PC-9 (cell line): ENCODE measurements at regions of chr17 and their contacts with region 1.

Region 1: DNA sequence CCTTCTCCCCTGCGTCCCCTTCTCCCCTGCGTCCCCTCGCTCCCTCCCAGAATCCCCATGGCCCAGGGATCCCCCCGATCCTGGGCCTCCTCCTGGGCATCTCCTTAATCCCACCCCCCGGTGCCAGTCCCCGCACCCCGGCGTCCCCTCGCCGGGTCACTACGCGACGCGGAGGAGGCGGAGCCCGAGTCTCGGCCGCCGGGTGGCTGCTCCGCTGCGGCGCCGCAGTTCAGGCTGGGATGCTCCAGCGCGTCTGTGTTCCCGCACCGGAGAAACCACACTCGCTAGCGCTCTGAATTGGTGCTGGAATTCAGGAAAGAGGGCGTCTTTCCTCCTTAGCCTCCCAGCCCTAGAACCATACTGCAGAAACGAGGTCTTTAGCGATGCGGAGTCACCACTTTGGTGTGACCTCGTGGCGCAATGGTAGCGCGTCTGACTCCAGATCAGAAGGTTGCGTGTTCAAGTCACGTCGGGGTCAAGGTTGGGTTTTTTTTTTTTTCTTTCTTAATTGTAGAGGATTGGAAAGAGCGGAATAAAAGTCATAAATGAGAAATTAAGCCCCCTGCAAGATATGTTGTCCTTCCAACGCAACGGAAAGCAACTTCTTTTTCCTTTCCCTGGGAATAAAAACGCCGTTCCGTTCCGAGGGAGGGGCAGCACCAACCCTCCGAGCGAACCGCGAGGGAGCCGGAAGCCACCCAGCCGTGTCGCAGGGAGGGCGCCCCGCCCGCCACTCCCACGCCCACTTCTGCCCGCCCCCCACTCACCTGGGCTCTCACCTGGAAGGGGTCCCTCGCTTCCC is 25.7 kb upstream of the SLC47A1 start:
- DNase-seq: peak; percentile 83 to 86
- H3K4me3 ChIP-seq: peak overlapping the region; percentile 63
- H3K27ac ChIP-seq: peak overlapping the region; percentile 44
- H3K4me1 ChIP-seq: 0 out of 2 replicates have a peak, but pooled peaks cover 5% of the 10 kb centered on the region
- H3K27me3 ChIP-seq: no peaks in the 10 kb centered on the region
- CTCF ChIP-seq: no peak; the same call in 1 of the 2 replicates

Region 2: GRCh38 chr17:18951941-18952842 is 555.8 kb before region 1 on chr17 and contains the start of gene SLC5A10:
- CTCF ChIA-PET with region 1: no interaction called
- POLR2A ChIA-PET with region 1: no interaction called
- intact Hi-C with region 1: no loop called
- DNase-seq: no peak
- H3K4me3 ChIP-seq: no peak within 1 kb of the TSS
- H3K27ac ChIP-seq: no peak within 1 kb of the TSS
- H3K4me1 ChIP-seq: 0 out of 2 replicates have a peak, but pooled peaks cover under 1% of the 10 kb centered on the region
- H3K27me3 ChIP-seq: peaks cover 5% of the 10 kb centered on the region; the same call in 1 of the 2 replicates
- CTCF ChIP-seq: peak; percentile 36; the same call in 1 of the 2 replicates
- total RNA-seq, gene SLC5A10: 0.08 and 0.17 TPM in 2 replicates

Region 3: DNA sequence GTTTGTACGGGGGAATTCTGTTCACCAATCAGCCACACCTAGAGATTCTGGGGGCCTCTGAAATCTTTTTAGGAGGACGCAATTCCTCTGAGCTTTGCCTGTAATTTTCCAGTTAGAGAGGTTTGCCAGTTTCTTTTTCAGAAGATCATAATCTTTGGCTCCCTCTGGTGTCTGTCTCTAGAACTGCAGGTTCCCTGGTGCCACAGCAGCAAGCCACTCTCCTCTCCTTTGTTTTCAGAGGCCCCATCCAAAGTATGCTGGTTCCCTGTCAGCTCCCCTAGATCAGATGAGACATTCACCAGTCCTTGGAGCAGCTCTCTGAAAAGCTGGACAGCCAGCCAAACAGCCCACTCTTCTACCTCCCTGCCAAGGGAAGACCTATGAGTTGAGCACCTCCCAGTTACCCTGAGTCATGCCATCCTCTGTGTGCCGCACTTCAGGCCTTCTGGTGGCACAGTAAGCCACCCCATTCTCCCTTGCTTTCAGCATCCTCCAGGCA is 60.8 kb before region 1 on chr17:
- CTCF ChIA-PET with region 1: no interaction called
- POLR2A ChIA-PET with region 1: no interaction called
- intact Hi-C with region 1: loop called (anchors 2 kb)
- DNase-seq: peak; percentile 53 to 73
- H3K4me3 ChIP-seq: no peak overlapping the region
- H3K27ac ChIP-seq: no peak overlapping the region
- H3K4me1 ChIP-seq: peaks cover 24% of the 10 kb centered on the region
- H3K27me3 ChIP-seq: no peaks in the 10 kb centered on the region
- CTCF ChIP-seq: peak; percentile 98

Region 4: DNA sequence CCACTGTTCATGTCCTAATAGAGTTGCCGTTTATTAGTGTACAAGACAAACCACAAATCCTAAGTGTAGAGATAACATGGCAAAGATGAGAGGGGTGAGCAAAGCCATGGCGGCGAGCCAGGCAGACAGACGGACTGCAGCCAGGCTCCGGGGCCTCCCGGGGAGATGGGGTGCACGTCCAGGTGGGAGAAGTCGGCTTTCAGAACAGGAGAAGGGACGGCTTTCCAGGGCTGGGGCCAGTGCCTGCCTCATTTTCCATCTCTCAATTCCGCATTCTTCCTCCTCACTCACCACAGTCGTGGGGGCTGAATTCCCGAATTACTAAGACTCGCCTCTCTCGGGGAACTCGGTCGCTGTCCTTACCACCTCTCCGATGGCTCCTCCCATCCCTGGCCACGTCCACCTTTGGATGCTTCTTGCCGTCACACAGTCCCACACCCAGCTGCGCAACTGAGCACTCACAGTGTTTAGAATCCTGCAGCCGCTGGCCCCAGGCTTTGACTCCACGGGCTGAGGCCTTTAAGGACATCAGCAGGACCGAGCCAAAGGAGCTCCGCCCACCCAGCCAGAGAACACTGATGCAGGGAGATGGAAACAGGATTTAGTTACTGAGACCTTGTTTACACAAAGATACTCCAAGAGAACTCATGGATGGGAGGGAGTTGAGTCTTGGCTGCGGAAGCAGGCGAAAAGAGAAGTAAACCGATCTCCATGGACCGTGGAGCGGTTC is 37.3 kb before region 1 on chr17:
- CTCF ChIA-PET with region 1: no interaction called
- POLR2A ChIA-PET with region 1: no interaction called
- intact Hi-C with region 1: loop called (anchors 5 kb)
- DNase-seq: peak in 1 of 2 experiments; percentile 10
- H3K4me3 ChIP-seq: no peak overlapping the region
- H3K27ac ChIP-seq: no peak overlapping the region
- H3K4me1 ChIP-seq: no peaks in the 10 kb centered on the region
- H3K27me3 ChIP-seq: no peaks in the 10 kb centered on the region
- CTCF ChIP-seq: no peak

Region 5: DNA sequence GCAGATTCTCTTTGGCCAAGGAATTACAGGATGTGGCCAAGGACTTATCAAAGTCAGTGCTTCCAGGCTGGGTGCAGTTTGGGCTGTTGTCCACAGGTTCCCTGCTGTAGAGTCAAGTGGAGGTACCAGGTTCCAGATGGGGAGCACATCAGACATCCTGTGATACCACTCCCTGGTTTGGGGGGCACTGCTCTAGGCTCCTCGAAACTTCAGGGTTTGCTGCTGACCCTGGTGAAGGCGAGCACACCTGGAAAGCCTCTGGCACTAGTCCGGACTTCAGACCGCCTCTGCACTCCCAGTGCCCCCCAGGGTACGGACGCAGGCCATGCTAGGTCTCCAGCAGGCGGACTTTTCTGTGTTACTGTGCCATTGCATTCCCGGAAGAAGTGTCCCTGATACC is 36.4 kb after region 1 on chr17:
- CTCF ChIA-PET with region 1: no interaction called
- POLR2A ChIA-PET with region 1: no interaction called
- intact Hi-C with region 1: no loop called
- DNase-seq: no peak
- H3K4me3 ChIP-seq: no peak overlapping the region
- H3K27ac ChIP-seq: no peak overlapping the region
- H3K4me1 ChIP-seq: 0 out of 2 replicates have a peak, but pooled peaks cover 5% of the 10 kb centered on the region
- H3K27me3 ChIP-seq: no peaks in the 10 kb centered on the region
- CTCF ChIP-seq: no peak

Region 6: GRCh38 chr17:19833914-19834313 is 325.9 kb after region 1 on chr17:
- CTCF ChIA-PET with region 1: no interaction called
- POLR2A ChIA-PET with region 1: interaction called, 10 read pairs
- intact Hi-C with region 1: no loop called
- DNase-seq: no peak
- H3K4me3 ChIP-seq: no peak overlapping the region
- H3K27ac ChIP-seq: no peak overlapping the region
- H3K4me1 ChIP-seq: no peaks in the 10 kb centered on the region
- H3K27me3 ChIP-seq: no peaks in the 10 kb centered on the region
- CTCF ChIP-seq: no peak